GM10248 (cell line): ENCODE measurements at regions of chr2 and their contacts with region 1.

Region 1: GRCh38 chr2:64839844-64840243 is 149.4 kb upstream of the SLC1A4 start:
- DNase-seq: peak; percentile 72
- CTCF ChIP-seq: no peak

Region 2: GRCh38 chr2:64653349-64654062 is 186.3 kb before region 1 on chr2 and contains the start of gene SERTAD2:
- CTCF ChIA-PET with region 1: no interaction called
- POLR2A ChIA-PET with region 1: no interaction called
- DNase-seq: peak; percentile 95
- CTCF ChIP-seq: no peak

Region 3: DNA sequence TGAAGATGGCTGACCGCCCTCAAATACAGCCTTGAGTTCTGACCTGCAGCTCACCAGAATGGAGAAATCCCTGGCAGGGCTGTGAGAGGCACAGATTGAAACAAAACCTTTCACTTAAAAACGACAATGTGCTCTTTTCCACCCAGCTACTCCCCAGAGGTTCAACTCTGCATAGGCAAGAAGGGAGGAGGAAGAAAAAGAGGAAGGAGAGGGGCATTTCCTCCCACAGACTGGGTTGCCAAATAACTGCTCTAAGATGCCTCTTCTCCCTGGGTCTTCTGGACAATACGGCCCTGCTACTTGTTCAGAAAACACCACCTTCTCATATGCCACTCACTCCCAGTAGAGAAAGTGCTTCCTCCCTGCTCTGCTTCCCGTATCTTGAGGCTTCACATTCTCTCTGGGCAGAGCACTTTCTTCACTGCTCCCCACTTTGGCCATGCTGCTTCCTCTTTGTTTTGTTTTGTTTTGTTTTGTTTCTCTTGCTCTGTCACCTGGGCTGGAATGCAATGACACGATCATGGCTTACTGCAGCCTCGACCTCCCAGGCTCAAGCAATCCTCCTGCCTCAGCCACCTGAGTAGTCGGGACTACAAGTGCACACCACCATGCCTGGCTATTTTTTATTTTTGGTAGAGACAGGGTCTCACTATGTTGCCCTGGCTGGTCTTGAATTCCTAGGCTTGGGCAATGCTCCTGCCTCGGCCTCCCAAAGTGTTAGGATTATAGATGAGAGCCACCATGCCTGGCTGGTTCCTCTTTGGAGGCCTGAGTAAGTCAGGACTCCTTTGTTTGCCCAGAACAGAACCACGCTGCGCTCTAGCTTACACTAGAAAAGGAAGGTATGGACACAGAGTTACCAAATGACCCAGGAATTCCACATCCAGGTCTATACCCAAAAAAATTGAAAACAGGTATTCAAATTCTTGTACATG is 13.2 kb after region 1 on chr2:
- CTCF ChIA-PET with region 1: interaction called, 19 read pairs
- POLR2A ChIA-PET with region 1: interaction called, 3 read pairs
- DNase-seq: no peak
- CTCF ChIP-seq: no peak